K562 (cell line): ENCODE measurements at regions of chr12 and their contacts with region 1.

Region 1: DNA sequence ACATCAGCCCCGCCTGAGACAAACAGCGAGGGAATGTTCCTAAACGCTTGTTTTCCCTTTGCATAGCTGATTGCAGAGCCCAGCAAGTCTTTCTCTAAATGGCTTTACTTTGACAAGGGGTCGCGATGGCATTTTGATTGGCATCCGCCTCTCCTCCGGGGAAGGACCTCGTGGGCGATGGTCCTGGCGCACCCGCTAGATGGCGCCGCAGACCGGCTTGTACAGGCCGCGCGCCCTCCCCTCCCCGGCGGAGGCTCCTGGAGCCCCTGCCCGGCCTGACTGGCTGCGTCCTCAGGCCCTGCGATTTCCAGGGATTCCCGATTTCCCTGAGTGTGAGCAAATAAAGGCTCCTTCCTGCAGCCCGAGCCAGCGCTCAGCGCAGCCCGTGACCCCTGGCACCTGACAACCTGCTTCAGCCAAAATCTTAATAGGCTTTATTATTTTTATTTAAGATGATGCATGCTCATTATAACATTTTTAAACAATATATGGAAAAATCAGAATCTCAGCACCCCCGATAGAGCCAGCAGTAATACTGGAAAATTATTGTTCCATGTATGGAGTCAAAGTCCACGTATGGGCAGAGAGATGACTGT is 468.3 kb downstream of the AACS start:
- DNase-seq: peak; percentile 55 to 72 (median 69)
- ATAC-seq: peak; percentile 100
- H3K4me3 ChIP-seq: no peak overlapping the region
- H3K27ac ChIP-seq: no peak overlapping the region
- H3K4me1 ChIP-seq: peaks cover 0 to 4% of the 10 kb centered on the region in 2 experiments; a peak in 1 of 5 replicates
- H3K27me3 ChIP-seq: no peaks in the 10 kb centered on the region
- CTCF ChIP-seq: peak; percentile 74 to 85 (median 75)
- EP300 ChIP-seq: no peak
- POLR2A ChIP-seq: no peak
- RAD21 ChIP-seq: peak; percentile 88 to 89

Region 2: GRCh38 chr12:125284949-125285685 is 248.4 kb before region 1 on chr12:
- CTCF ChIA-PET with region 1: no interaction called
- POLR2A ChIA-PET with region 1: no interaction called
- in situ Hi-C with region 1: no loop called
- intact Hi-C with region 1: no loop called
- DNase-seq: peak in 3 of 4 experiments; percentile 13 to 33 (median 19)
- ATAC-seq: peak; percentile 77
- H3K4me3 ChIP-seq: no peak overlapping the region
- H3K27ac ChIP-seq: no peak overlapping the region
- H3K4me1 ChIP-seq: no peaks in the 10 kb centered on the region
- H3K27me3 ChIP-seq: peaks cover 11 to 30% of the 10 kb centered on the region in 2 experiments; a peak in 4 of 5 replicates
- CTCF ChIP-seq: no peak
- EP300 ChIP-seq: no peak
- POLR2A ChIP-seq: no peak
- RAD21 ChIP-seq: no peak

Region 3: DNA sequence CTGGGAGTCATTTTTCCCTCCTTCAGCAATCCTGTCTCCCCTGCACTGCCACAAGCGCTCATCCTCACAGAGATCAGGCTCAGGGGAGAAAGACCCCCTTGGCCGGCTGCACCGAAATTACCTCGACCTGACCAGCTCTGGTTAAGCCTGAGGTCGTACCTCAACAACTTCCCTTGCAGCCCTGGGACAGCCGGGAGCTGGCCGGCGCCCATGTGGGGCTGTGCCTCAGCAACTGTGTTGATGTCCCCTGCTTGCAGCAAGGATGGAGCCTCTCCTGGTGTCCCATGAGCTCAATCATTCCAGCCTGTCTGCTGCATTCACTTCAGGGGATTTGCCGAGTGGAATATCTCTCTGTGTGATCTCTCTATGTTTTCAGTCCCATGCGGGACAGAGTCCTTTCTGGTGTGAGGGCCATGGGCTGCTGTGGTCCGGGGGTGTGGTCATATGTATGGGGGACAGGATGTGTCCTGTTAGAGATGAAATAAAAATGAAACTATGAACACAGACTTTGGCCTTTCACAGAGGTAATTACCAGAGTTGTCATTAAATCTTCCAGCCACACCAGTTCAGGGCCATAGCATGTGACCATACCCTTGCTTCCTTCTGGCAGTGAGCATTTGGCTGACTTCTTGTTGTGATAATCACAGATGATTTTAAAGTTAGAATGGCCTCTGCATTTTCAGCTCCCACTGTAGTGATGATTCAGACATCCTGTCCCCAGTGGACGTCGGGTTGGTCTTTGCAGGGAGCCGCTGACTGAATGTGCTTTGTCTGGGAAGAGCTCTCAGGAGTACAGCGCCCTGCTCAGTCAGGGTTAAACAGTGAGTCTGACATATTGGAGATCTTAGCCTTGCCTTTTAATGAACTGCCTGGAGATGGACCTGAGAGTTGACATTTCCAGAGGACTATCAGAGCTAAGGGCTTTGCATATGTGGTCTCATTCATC is 62.4 kb before region 1 on chr12:
- CTCF ChIA-PET with region 1: no interaction called
- POLR2A ChIA-PET with region 1: no interaction called
- in situ Hi-C with region 1: no loop called
- intact Hi-C with region 1: no loop called
- DNase-seq: no peak
- ATAC-seq: no peak
- H3K4me3 ChIP-seq: no peak overlapping the region
- H3K27ac ChIP-seq: no peak overlapping the region
- H3K4me1 ChIP-seq: no peaks in the 10 kb centered on the region
- H3K27me3 ChIP-seq: no peaks in the 10 kb centered on the region
- CTCF ChIP-seq: no peak
- EP300 ChIP-seq: no peak
- POLR2A ChIP-seq: no peak
- RAD21 ChIP-seq: no peak

Region 4: GRCh38 chr12:126061777-126062176 is 528.2 kb after region 1 on chr12:
- CTCF ChIA-PET with region 1: no interaction called
- POLR2A ChIA-PET with region 1: no interaction called
- in situ Hi-C with region 1: no loop called
- intact Hi-C with region 1: loop called (anchors 5 kb)
- DNase-seq: no peak
- ATAC-seq: no peak
- H3K4me3 ChIP-seq: no peak overlapping the region
- H3K27ac ChIP-seq: no peak overlapping the region
- H3K4me1 ChIP-seq: no peaks in the 10 kb centered on the region
- H3K27me3 ChIP-seq: no peaks in the 10 kb centered on the region
- CTCF ChIP-seq: no peak
- EP300 ChIP-seq: no peak
- POLR2A ChIP-seq: no peak
- RAD21 ChIP-seq: no peak

Region 5: GRCh38 chr12:126747530-126748149 is 1214.1 kb after region 1 on chr12:
- CTCF ChIA-PET with region 1: no interaction called
- POLR2A ChIA-PET with region 1: no interaction called
- in situ Hi-C with region 1: no loop called
- intact Hi-C with region 1: loop called (anchors 10 kb)
- DNase-seq: peak; percentile 67 to 83 (median 82)
- ATAC-seq: peak; percentile 94
- H3K4me3 ChIP-seq: no peak overlapping the region
- H3K27ac ChIP-seq: no peak overlapping the region
- H3K4me1 ChIP-seq: no peaks in the 10 kb centered on the region
- H3K27me3 ChIP-seq: no peaks in the 10 kb centered on the region
- CTCF ChIP-seq: peak; percentile 72 to 93 (median 79)
- EP300 ChIP-seq: no peak
- POLR2A ChIP-seq: no peak
- RAD21 ChIP-seq: peak; percentile 29 to 61; a peak in 3 of 4 replicates

Region 6: GRCh38 chr12:127381048-127381668 is 1847.6 kb after region 1 on chr12:
- CTCF ChIA-PET with region 1: no interaction called
- POLR2A ChIA-PET with region 1: no interaction called
- in situ Hi-C with region 1: no loop called
- intact Hi-C with region 1: loop called (anchors 5 kb)
- DNase-seq: peak; percentile 70 to 85 (median 82)
- ATAC-seq: peak; percentile 100
- H3K4me3 ChIP-seq: no peak overlapping the region
- H3K27ac ChIP-seq: no peak overlapping the region
- H3K4me1 ChIP-seq: peaks cover 0 to 4% of the 10 kb centered on the region in 2 experiments; a peak in 1 of 5 replicates
- H3K27me3 ChIP-seq: peaks cover 0 to 5% of the 10 kb centered on the region in 2 experiments; a peak in 1 of 5 replicates
- CTCF ChIP-seq: peak; percentile 88 to 91 (median 90)
- EP300 ChIP-seq: no peak
- POLR2A ChIP-seq: no peak
- RAD21 ChIP-seq: peak; percentile 76 to 93